PC-3 (cell line): ENCODE measurements at regions of chr12 and their contacts with region 1.

Region 1: DNA sequence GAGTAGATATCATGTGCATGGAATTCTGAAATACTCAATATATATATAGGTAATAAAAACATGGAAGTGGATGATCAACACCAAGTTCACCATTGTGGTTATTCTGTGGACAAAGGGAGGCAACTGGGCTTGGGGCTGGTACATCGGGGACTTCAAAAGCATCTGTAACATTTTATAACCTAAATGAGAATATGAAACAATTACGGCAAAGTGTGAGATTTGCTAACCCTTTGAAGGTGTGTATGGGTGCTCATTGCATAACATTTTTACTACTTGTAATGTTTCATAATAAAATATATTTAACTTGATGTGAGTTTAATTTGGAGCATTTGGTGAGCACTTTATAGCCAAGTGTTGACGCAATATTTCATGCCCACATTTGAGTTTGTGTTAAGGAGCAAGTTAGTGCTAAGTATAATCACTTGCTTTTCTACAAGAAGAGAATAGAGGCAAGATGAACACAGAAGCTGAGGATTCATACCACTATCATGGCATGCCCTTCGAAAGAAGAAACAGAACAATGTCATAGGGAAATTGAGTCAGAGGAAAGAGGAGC is 109.3 kb downstream of the NTN4 start:
- DNase-seq: no peak
- ATAC-seq: no peak
- H3K4me3 ChIP-seq: no peak overlapping the region
- H3K27ac ChIP-seq: no peak overlapping the region
- H3K4me1 ChIP-seq: no peaks in the 10 kb centered on the region
- H3K27me3 ChIP-seq: no peaks in the 10 kb centered on the region
- CTCF ChIP-seq: no peak

Region 2: GRCh38 chr12:95265765-95266164 is 415.5 kb before region 1 on chr12:
- CTCF ChIA-PET with region 1: no interaction called
- POLR2A ChIA-PET with region 1: no interaction called
- intact Hi-C with region 1: no loop called
- DNase-seq: no peak
- ATAC-seq: no peak
- H3K4me3 ChIP-seq: no peak overlapping the region
- H3K27ac ChIP-seq: no peak overlapping the region
- H3K4me1 ChIP-seq: peaks cover 13% of the 10 kb centered on the region
- H3K27me3 ChIP-seq: no peaks in the 10 kb centered on the region
- CTCF ChIP-seq: no peak

Region 3: DNA sequence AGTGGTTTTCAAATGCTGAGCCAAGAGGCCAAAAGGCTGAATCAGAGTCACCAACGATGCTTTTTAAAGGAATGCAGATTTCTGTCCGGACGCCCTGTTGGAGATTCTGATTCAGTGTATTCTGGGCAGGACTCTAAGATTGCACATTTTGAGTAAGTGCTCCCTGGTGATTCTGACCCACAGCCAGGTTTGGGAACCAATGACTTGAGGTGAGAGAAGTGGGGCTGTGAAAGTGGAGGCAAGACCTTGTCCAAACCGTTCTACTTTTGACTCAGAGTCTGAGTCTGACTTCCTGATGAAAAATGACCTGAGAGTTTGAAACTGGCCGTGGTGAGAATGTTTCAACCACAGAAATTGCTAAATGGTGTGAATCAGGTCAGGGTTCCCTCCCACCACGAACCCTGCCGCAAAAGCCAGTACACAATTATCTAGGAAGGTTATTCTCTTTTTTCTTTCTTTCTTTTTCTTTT is 19.1 kb after region 1 on chr12:
- CTCF ChIA-PET with region 1: no interaction called
- POLR2A ChIA-PET with region 1: interaction called, 10 read pairs
- intact Hi-C with region 1: no loop called
- DNase-seq: peak; percentile 84
- ATAC-seq: peak; percentile 26
- H3K4me3 ChIP-seq: no peak overlapping the region
- H3K27ac ChIP-seq: peak overlapping the region; percentile 99
- H3K4me1 ChIP-seq: peaks cover 33% of the 10 kb centered on the region
- H3K27me3 ChIP-seq: no peaks in the 10 kb centered on the region
- CTCF ChIP-seq: no peak

Region 4: GRCh38 chr12:96007729-96008128 is 326.4 kb after region 1 on chr12:
- CTCF ChIA-PET with region 1: no interaction called
- POLR2A ChIA-PET with region 1: no interaction called
- intact Hi-C with region 1: no loop called
- DNase-seq: no peak
- ATAC-seq: no peak
- H3K4me3 ChIP-seq: no peak overlapping the region
- H3K27ac ChIP-seq: no peak overlapping the region
- H3K4me1 ChIP-seq: no peaks in the 10 kb centered on the region
- H3K27me3 ChIP-seq: no peaks in the 10 kb centered on the region
- CTCF ChIP-seq: no peak